MCF 10A (cell line): ENCODE measurements at regions of chr14 and their contacts with region 1.

Region 1: GRCh38 chr14:52906071-52906601 is 44.7 kb downstream of the FERMT2 start:
- DNase-seq: peak; percentile 81
- H3K4me3 Mint-ChIP-seq: peak overlapping the region; percentile 44
- H3K27ac Mint-ChIP-seq: peak overlapping the region; percentile 77
- H3K4me1 Mint-ChIP-seq: peaks cover 54% of the 10 kb centered on the region
- H3K27me3 Mint-ChIP-seq: no peaks in the 10 kb centered on the region
- CTCF ChIP-seq: no peak

Region 2: DNA sequence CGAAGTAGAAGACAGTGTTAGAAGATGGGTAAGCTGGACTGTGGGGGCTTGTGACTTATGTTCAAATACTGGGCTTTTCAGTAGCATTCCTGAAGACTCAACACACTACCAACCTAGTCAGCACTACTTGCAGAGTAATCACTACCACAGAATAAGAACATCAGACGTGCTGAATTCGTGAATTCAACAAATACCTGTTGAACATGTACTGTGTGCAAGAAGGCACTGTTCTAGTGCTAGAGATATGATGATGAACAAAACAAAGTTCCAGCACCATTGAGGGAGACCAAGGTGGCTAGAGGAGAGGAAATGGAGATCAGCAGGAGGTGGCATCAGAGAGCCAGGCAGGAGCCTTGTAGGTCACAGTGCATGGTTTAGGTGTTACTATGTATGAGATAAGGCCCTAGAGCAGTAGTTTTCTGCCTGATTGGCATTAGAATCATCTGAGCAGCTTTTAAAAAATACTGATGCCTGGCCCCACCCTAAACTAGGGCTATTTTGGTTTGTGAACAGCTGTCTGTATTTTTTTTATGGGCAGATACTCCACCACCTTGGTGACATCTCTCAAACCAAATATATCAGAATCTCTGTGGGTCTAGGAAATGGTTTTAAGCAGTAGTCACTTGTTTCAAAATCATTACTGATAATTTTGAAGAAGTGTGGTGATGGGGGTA is 17.9 kb after region 1 on chr14:
- CTCF ChIA-PET with region 1: no interaction called
- POLR2A ChIA-PET with region 1: interaction called, 10 read pairs
- intact Hi-C with region 1: no loop called
- DNase-seq: no peak
- H3K4me3 Mint-ChIP-seq: no peak overlapping the region
- H3K27ac Mint-ChIP-seq: peak overlapping the region; percentile 70
- H3K4me1 Mint-ChIP-seq: peaks cover 56% of the 10 kb centered on the region
- H3K27me3 Mint-ChIP-seq: no peaks in the 10 kb centered on the region
- CTCF ChIP-seq: no peak

Region 3: DNA sequence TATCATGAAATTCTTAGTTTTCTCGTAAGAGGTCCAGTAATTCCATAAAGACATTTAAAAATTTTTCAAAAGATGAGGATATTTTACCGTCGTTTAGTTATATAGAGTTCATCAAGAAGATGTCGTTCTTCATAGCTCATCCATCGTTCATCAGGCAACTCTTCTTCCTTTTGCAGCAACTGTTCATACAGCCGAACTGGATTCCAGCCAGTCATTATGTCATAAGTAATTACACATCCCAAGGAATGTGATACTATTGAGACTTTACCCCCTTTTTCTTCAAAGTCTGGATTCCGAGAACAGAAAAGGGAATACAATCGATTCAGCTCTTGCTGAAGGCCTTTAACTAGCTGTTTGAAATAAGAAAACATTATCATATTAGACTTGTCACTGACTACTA is 156.7 kb after region 1 on chr14:
- CTCF ChIA-PET with region 1: no interaction called
- POLR2A ChIA-PET with region 1: no interaction called
- intact Hi-C with region 1: no loop called
- DNase-seq: no peak
- H3K4me3 Mint-ChIP-seq: no peak overlapping the region
- H3K27ac Mint-ChIP-seq: no peak overlapping the region
- H3K4me1 Mint-ChIP-seq: no peaks in the 10 kb centered on the region
- H3K27me3 Mint-ChIP-seq: no peaks in the 10 kb centered on the region
- CTCF ChIP-seq: no peak